Calu3 (cell line): ENCODE measurements at regions of chr6 and their contacts with region 1.

Region 1: DNA sequence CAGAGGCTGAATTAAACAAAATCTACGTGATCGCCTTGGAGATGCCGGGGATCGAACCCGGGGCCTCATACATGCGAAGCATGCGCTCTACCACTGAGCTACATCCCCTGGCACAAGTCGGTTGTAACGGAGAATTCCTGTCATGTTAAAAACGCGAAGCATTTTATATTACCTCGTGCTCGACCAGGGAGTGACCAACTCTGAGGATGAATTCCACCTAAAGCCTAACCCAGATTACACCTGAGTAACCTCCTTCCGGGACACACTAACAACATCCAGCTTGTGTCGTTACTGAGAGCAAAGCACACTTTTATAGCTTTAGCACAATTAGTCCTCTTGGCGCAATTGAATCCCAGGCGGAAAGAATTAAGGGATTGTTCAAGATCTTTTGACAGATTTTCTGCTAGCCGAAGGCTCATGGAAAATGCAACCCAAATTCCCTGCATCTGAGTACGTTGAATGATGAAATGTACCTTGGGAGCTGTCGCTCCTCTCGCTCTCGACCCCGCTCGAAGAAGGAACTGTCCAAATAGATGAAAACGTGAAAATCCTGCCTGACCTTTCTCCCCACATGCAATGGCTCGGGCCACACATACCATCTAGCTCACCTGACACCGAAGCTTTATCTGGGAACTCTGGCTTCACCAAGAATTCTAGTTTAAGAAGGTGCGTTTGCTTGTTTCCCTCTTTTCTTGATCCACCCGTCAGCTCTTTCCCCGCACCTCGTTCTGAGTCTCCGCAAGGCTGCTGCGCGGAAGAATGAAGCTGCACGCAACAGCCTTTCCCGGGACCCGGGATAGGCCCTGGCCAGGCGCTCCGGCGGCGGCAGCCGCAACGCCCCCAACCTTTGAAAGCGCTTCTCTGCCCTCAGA is 148.4 kb downstream of the GPX5 start:
- DNase-seq: peak; percentile 75
- H3K4me3 Mint-ChIP-seq: peak overlapping the region; percentile 88
- H3K27ac Mint-ChIP-seq: peak overlapping the region; percentile 73
- H3K4me1 Mint-ChIP-seq: peaks cover 16% of the 10 kb centered on the region
- H3K27me3 Mint-ChIP-seq: peaks cover 8% of the 10 kb centered on the region
- CTCF ChIP-seq: no peak

Region 2: DNA sequence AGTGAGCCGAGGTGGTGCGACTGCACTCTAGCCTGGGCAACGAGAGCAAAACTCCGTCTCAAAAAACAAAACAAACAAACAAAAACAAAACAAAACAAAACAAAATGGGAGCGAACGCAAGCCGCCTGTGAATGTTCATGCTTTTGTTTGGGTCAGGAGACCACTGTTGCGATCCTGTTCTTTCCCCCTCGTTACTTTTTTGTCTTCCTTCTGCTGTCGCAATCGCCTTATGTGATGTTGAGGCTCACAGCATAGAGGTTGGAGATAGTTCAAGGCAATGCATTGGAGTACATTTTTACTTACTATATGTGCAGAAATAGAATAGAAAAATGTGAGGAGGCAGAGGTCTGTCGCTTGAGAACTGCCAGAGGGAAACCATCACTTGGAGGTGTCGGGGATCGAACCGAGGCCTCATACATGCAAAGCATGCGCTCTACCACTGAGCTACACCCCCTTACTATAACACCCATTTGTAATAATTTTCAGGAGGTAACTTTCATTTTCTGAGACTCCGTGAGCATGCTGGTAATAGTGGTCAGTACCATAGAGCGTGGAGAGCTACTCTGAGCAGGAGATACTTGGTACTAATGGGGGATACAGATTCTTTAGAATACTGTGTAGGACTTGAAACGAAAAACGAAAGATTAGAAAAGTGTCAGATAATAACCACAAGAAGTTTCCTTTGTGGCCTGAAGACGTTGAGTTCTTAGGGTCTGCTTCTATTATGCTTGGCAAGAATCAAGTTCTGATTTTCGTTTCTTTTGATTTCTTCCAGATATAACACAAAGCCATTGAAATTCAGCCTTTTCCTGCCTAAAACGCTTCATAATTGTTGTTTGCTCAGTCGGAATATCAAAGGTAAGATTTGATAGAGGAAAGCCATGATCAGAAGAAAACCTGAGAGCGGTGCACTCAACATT is 128.6 kb after region 1 on chr6:
- CTCF ChIA-PET with region 1: interaction called, 11 read pairs
- intact Hi-C with region 1: no loop called
- DNase-seq: peak; percentile 62
- H3K4me3 Mint-ChIP-seq: peak overlapping the region; percentile 67
- H3K27ac Mint-ChIP-seq: peak overlapping the region; percentile 81
- H3K4me1 Mint-ChIP-seq: peaks cover 20% of the 10 kb centered on the region
- H3K27me3 Mint-ChIP-seq: no peaks in the 10 kb centered on the region
- CTCF ChIP-seq: no peak